ENCODE measurements at regions of chr11 and their contacts with region 1.

Region 1: GRCh38 chr11:120108154-120108865 is 29.6 kb downstream of the TRIM29 start:
- DNase-seq: peak; percentile 73
- ATAC-seq: peak; percentile 97
- H3K4me3 Mint-ChIP-seq: no peak overlapping the region
- H3K27ac Mint-ChIP-seq: no peak overlapping the region
- H3K4me1 Mint-ChIP-seq: no peaks in the 10 kb centered on the region
- H3K27me3 Mint-ChIP-seq: peaks cover 7% of the 10 kb centered on the region
- CTCF ChIP-seq: peak; percentile 95

Region 2: DNA sequence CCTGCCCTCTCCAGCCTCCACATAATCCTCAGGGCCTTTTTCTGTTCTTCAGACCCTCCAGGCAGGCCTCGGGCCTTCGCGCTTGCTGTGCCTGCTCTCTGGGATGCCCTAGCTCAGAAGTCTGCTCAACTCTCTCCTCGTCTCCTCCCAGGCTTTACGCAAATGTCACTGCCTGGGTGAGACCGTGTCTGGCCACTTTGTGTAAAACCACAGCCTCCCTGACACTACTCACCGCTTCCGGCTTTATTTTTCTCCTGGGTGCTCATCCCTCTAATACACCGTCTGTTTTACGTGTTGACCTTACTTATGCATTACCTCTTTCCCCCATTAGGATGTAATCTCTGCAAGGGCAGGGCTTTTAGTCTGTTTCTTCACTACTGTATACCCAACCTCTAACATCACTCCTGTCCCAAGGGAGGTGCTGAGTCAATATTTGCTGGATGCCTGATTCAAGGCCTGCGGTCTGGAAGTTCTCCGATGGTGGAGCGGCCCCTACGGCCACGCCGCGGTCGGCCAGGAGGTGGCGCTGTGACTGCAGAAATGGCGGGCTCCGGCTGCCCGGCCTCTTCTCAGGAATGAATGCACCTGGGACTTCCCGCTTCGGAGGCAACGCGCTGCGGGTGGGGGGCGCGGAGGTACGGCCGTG is 627.2 kb before region 1 on chr11:
- CTCF ChIA-PET with region 1: interaction called, 3 read pairs
- POLR2A ChIA-PET with region 1: no interaction called
- intact Hi-C with region 1: loop called (anchors 10 kb)
- DNase-seq: peak; percentile 80
- ATAC-seq: peak; percentile 87
- H3K4me3 Mint-ChIP-seq: no peak overlapping the region
- H3K27ac Mint-ChIP-seq: no peak overlapping the region
- H3K4me1 Mint-ChIP-seq: no peaks in the 10 kb centered on the region
- H3K27me3 Mint-ChIP-seq: peaks cover 6% of the 10 kb centered on the region
- CTCF ChIP-seq: peak; percentile 99

Region 3: GRCh38 chr11:119666463-119667131 is 441.7 kb before region 1 on chr11:
- CTCF ChIA-PET with region 1: interaction called, 8 read pairs
- POLR2A ChIA-PET with region 1: no interaction called
- intact Hi-C with region 1: loop called (anchors 5 kb)
- DNase-seq: peak; percentile 73
- ATAC-seq: peak; percentile 97
- H3K4me3 Mint-ChIP-seq: no peak overlapping the region
- H3K27ac Mint-ChIP-seq: no peak overlapping the region
- H3K4me1 Mint-ChIP-seq: no peaks in the 10 kb centered on the region
- H3K27me3 Mint-ChIP-seq: no peaks in the 10 kb centered on the region
- CTCF ChIP-seq: peak; percentile 87

Region 4: GRCh38 chr11:119759324-119759723 is 349.0 kb before region 1 on chr11:
- CTCF ChIA-PET with region 1: no interaction called
- POLR2A ChIA-PET with region 1: no interaction called
- intact Hi-C with region 1: loop called (anchors 10 kb)
- DNase-seq: peak; percentile 27
- ATAC-seq: no peak
- H3K4me3 Mint-ChIP-seq: no peak overlapping the region
- H3K27ac Mint-ChIP-seq: no peak overlapping the region
- H3K4me1 Mint-ChIP-seq: no peaks in the 10 kb centered on the region
- H3K27me3 Mint-ChIP-seq: peaks cover 13% of the 10 kb centered on the region
- CTCF ChIP-seq: no peak

Region 5: GRCh38 chr11:120121871-120122473 is 13.7 kb after region 1 on chr11:
- CTCF ChIA-PET with region 1: interaction called, 16 read pairs
- POLR2A ChIA-PET with region 1: no interaction called
- intact Hi-C with region 1: no loop called
- DNase-seq: no peak
- ATAC-seq: no peak
- H3K4me3 Mint-ChIP-seq: no peak overlapping the region
- H3K27ac Mint-ChIP-seq: no peak overlapping the region
- H3K4me1 Mint-ChIP-seq: no peaks in the 10 kb centered on the region
- H3K27me3 Mint-ChIP-seq: peaks cover 2% of the 10 kb centered on the region
- CTCF ChIP-seq: no peak

Region 6: GRCh38 chr11:120182790-120183491 is 74.6 kb after region 1 on chr11:
- CTCF ChIA-PET with region 1: no interaction called
- POLR2A ChIA-PET with region 1: no interaction called
- intact Hi-C with region 1: no loop called
- DNase-seq: no peak
- ATAC-seq: no peak
- H3K4me3 Mint-ChIP-seq: no peak overlapping the region
- H3K27ac Mint-ChIP-seq: no peak overlapping the region
- H3K4me1 Mint-ChIP-seq: peaks cover 7% of the 10 kb centered on the region
- H3K27me3 Mint-ChIP-seq: peaks cover 12% of the 10 kb centered on the region
- CTCF ChIP-seq: no peak

Region 7: DNA sequence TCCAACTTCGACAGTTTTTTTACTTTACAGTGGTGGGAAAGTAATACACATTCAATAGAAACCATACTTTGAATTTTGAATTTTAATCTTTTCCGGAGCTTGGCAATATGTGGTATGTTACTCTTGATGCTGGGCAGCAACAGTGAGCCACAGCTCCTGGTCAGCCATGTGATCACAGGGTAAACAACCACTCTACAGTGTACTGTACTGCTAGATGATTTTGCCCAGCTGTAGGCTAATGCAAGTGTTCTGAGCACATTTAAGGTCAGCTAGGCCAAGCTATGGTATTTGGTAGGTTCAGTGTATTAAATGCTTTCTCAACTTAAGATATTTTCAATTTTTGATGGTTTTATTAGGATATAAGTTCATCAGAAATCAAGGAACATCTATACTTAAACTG is 354.5 kb after region 1 on chr11:
- CTCF ChIA-PET with region 1: no interaction called
- POLR2A ChIA-PET with region 1: no interaction called
- intact Hi-C with region 1: no loop called
- DNase-seq: no peak
- ATAC-seq: no peak
- H3K4me3 Mint-ChIP-seq: no peak overlapping the region
- H3K27ac Mint-ChIP-seq: no peak overlapping the region
- H3K4me1 Mint-ChIP-seq: no peaks in the 10 kb centered on the region
- H3K27me3 Mint-ChIP-seq: no peaks in the 10 kb centered on the region
- CTCF ChIP-seq: no peak